Activated CD4-positive, alpha-beta T cell treated with anti-CD3 and anti-CD28 coated beads, Interleukin-2, amount 10 ng/mL, durations not matched to agents 24 days and 14 days (primary cell): ENCODE measurements at regions of chr4 and their contacts with region 1.

Region 1: GRCh38 chr4:9999956-10000551 is 21.2 kb downstream of the SLC2A9 start:
- DNase-seq: no peak
- H3K4me3 Mint-ChIP-seq: no peak overlapping the region
- H3K27ac Mint-ChIP-seq: peak overlapping the region; percentile 64
- H3K4me1 Mint-ChIP-seq: peaks cover 42% of the 10 kb centered on the region
- H3K27me3 Mint-ChIP-seq: no peaks in the 10 kb centered on the region

Region 2: GRCh38 chr4:9812501-9813340 is 187.3 kb before region 1 on chr4:
- intact Hi-C with region 1: loop called (anchors 2 kb)
- DNase-seq: peak; percentile 58
- H3K4me3 Mint-ChIP-seq: no peak overlapping the region
- H3K27ac Mint-ChIP-seq: no peak overlapping the region
- H3K4me1 Mint-ChIP-seq: peaks cover 10% of the 10 kb centered on the region
- H3K27me3 Mint-ChIP-seq: peaks cover 34% of the 10 kb centered on the region

Region 3: DNA sequence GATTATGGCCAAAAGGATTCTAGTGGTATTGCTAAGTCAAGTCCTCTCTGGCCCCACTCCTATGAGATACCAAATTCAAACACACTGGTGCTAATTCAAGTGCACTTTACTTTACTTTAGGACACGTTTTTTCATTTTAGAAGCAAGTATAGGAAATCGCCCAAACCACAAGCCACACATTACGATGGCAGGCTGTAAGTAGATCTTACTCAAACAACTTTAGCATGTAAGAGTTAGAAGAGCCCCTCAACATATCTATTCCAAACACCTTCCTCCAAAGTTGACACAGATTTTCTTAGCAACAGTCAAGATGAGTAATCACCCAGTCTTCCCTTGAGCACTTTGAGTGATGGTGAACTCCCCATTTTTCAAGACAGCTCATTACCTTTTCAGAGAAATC is 175.0 kb before region 1 on chr4:
- intact Hi-C with region 1: loop called (anchors 2 kb)
- DNase-seq: peak; percentile 78
- H3K4me3 Mint-ChIP-seq: no peak overlapping the region
- H3K27ac Mint-ChIP-seq: peak overlapping the region; percentile 9
- H3K4me1 Mint-ChIP-seq: peaks cover 14% of the 10 kb centered on the region
- H3K27me3 Mint-ChIP-seq: peaks cover 30% of the 10 kb centered on the region

Region 4: DNA sequence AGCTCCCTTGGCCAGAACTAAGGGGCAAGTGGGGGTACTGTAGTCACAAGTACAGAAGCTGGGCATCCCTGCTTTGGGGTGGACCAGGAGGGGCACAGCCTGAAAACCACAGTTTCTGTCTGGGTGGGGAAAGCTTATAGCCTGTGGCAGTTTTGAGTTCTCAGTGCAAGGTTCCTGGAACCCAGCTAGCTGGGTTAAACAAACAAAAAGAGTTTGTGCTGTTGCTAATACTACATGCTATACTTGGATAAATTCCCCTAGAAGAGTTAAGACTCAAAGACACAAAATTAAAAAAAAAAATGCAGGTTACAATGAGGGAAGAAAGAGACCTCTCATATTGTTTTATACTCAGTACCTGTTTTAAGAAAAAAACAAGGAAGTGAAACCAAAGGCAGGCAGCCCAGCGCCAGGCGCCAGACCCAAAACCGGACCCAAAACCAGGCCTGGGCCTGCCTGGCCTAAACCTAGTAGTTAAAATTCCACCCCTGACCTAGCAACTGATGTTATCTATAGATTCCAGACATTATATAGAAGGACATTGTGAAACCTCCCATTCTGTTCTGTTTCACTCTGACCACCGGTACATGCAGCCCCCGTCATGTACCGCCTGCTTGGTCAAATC is 29.6 kb before region 1 on chr4:
- intact Hi-C with region 1: loop called (anchors 1 kb)
- DNase-seq: no peak
- H3K4me3 Mint-ChIP-seq: peak overlapping the region; percentile 48
- H3K27ac Mint-ChIP-seq: peak overlapping the region; percentile 78
- H3K4me1 Mint-ChIP-seq: peaks cover 29% of the 10 kb centered on the region
- H3K27me3 Mint-ChIP-seq: peaks cover 3% of the 10 kb centered on the region

Region 5: DNA sequence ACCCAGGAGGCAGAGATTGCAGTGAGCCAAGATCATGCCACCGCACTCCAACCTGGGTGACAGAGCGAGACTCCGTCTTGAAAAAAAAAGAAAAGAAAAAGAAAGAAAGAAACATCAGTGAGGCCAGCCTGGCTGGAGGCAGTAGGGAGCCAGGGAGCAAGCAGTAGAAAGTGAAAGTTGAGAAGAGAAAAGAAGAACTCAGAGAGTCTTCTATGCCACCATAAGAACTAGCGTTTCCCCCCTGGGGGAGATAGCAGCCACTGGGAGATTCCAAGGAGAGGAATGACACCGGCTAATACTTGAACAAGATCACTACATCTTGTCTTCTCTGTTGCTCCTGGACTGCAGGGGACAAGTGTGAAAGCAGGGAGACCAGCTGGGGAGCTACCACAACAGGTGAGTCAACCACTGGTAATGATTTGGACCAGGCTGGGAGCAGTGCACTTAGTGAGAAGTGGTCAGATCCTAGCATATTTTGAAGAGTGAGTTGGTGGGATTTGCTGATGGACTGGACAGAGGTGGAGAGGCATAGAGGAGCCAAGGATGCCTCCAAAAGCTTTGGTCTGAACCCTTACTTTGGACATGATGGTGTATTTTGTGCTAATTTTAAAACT is 12.2 kb before region 1 on chr4:
- intact Hi-C with region 1: no loop called
- DNase-seq: no peak
- H3K4me3 Mint-ChIP-seq: no peak overlapping the region
- H3K27ac Mint-ChIP-seq: no peak overlapping the region
- H3K4me1 Mint-ChIP-seq: no peaks in the 10 kb centered on the region
- H3K27me3 Mint-ChIP-seq: no peaks in the 10 kb centered on the region

Region 6: GRCh38 chr4:10821826-10822225 is 821.8 kb after region 1 on chr4:
- intact Hi-C with region 1: no loop called
- DNase-seq: no peak
- H3K4me3 Mint-ChIP-seq: no peak overlapping the region
- H3K27ac Mint-ChIP-seq: no peak overlapping the region
- H3K4me1 Mint-ChIP-seq: no peaks in the 10 kb centered on the region
- H3K27me3 Mint-ChIP-seq: no peaks in the 10 kb centered on the region